Activated naive CD4-positive, alpha-beta T cell treated with anti-CD3 and anti-CD28 coated beads for 36 hours (primary cell): ENCODE measurements at regions of chr15 and their contacts with region 1.

Region 1: GRCh38 chr15:72796515-72797337 is 13.2 kb upstream of the ADPGK start:
- DNase-seq: peak; percentile 26
- H3K4me3 Mint-ChIP-seq: peak overlapping the region; percentile 70
- H3K27ac Mint-ChIP-seq: no peak overlapping the region
- H3K4me1 Mint-ChIP-seq: peaks cover 3% of the 10 kb centered on the region
- H3K27me3 Mint-ChIP-seq: peaks cover 20% of the 10 kb centered on the region

Region 2: GRCh38 chr15:72515591-72516389 is 280.9 kb before region 1 on chr15:
- CTCF ChIA-PET with region 1: no interaction called
- intact Hi-C with region 1: no loop called
- DNase-seq: no peak
- H3K4me3 Mint-ChIP-seq: no peak overlapping the region
- H3K27ac Mint-ChIP-seq: no peak overlapping the region
- H3K4me1 Mint-ChIP-seq: peaks cover 58% of the 10 kb centered on the region
- H3K27me3 Mint-ChIP-seq: no peaks in the 10 kb centered on the region

Region 3: GRCh38 chr15:72845981-72846383 is 49.3 kb after region 1 on chr15:
- CTCF ChIA-PET with region 1: no interaction called
- intact Hi-C with region 1: no loop called
- DNase-seq: no peak
- H3K4me3 Mint-ChIP-seq: no peak overlapping the region
- H3K27ac Mint-ChIP-seq: no peak overlapping the region
- H3K4me1 Mint-ChIP-seq: peaks cover 3% of the 10 kb centered on the region
- H3K27me3 Mint-ChIP-seq: peaks cover 23% of the 10 kb centered on the region

Region 4: GRCh38 chr15:73081321-73081958 is 284.7 kb after region 1 on chr15:
- CTCF ChIA-PET with region 1: no interaction called
- intact Hi-C with region 1: loop called (anchors 1 kb)
- DNase-seq: peak; percentile 6
- H3K4me3 Mint-ChIP-seq: no peak overlapping the region
- H3K27ac Mint-ChIP-seq: no peak overlapping the region
- H3K4me1 Mint-ChIP-seq: no peaks in the 10 kb centered on the region
- H3K27me3 Mint-ChIP-seq: no peaks in the 10 kb centered on the region

Region 5: DNA sequence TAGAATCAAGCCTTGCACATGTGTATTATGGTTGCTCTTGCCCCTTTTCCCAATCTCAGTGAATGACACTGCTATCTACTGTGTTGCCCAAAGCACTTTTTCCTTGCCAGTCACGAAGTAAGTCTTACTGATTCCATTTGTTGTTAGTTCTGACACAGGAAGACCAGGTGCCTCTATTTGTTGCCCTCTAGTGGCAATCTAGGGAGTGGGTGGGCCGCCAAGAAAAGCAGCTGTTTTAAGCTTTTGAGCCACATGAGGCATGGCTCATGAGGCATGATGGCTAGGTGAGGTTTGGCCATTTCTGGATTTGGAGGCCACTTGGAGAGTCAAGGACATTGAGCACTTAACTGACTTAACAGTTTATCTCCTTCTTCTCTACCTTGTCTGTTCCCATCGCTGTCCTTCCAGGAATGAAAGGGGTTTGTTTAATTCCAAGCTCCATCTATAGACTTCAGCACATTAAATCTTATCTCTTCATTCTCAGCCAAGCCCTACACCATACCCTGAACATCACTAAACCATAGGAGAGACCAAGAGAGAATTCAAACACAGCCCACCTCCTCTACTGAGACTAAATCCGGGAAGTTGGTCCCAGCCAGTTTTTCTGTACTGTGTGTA is 468.9 kb after region 1 on chr15:
- CTCF ChIA-PET with region 1: no interaction called
- intact Hi-C with region 1: loop called (anchors 5 kb)
- DNase-seq: peak; percentile 75
- H3K4me3 Mint-ChIP-seq: no peak overlapping the region
- H3K27ac Mint-ChIP-seq: no peak overlapping the region
- H3K4me1 Mint-ChIP-seq: peaks cover 2% of the 10 kb centered on the region
- H3K27me3 Mint-ChIP-seq: no peaks in the 10 kb centered on the region